Endothelial cell of umbilical vein (primary cell): ENCODE measurements at regions of chr9 and their contacts with region 1.

Region 1: GRCh38 chr9:131799177-131799823 is 59.4 kb upstream of the RAPGEF1 start:
- DNase-seq: peak; percentile 35
- H3K4me3 ChIP-seq: no peak overlapping the region
- H3K27ac ChIP-seq: no peak overlapping the region
- H3K4me1 ChIP-seq: no peaks in the 10 kb centered on the region
- H3K27me3 ChIP-seq: no peaks in the 10 kb centered on the region
- CTCF ChIP-seq: no peak
- POLR2A ChIP-seq: no peak

Region 2: DNA sequence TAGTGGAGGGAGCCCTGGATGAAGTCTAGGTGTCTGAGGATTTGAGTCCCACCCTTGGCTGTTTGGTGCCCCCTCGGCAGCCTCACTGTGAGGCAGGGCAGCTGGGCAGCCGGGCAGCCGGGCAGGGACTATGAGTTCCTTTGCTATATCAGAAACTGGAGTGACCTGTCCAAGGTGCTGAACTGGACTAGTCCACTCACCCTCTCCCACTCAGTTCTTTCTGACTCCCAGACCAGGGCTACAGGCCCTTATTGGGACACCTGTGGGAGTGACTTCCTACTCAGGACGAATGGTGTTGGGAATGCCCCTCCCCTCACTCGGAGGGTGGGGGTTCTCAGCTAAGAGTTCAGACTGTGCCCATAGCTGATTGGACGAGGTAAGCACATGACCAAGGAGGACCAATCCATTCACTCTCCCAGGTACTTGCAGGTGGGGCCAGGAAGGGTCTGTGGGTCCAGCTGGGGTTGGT is 25.4 kb before region 1 on chr9:
- CTCF ChIA-PET with region 1: no interaction called
- POLR2A ChIA-PET with region 1: no interaction called
- dilution Hi-C with region 1: no loop called
- intact Hi-C with region 1: loop called (anchors 1 kb)
- DNase-seq: peak; percentile 42
- H3K4me3 ChIP-seq: no peak overlapping the region
- H3K27ac ChIP-seq: no peak overlapping the region
- H3K4me1 ChIP-seq: no peaks in the 10 kb centered on the region
- H3K27me3 ChIP-seq: no peaks in the 10 kb centered on the region
- CTCF ChIP-seq: no peak
- POLR2A ChIP-seq: no peak

Region 3: GRCh38 chr9:131826968-131827525 is 27.7 kb after region 1 on chr9:
- CTCF ChIA-PET with region 1: no interaction called
- POLR2A ChIA-PET with region 1: no interaction called
- dilution Hi-C with region 1: no loop called
- intact Hi-C with region 1: loop called (anchors 2 kb)
- DNase-seq: no peak
- H3K4me3 ChIP-seq: no peak overlapping the region
- H3K27ac ChIP-seq: no peak overlapping the region
- H3K4me1 ChIP-seq: no peaks in the 10 kb centered on the region
- H3K27me3 ChIP-seq: peaks cover 0 to 2% of the 10 kb centered on the region in 2 experiments
- CTCF ChIP-seq: no peak
- POLR2A ChIP-seq: no peak

Region 4: DNA sequence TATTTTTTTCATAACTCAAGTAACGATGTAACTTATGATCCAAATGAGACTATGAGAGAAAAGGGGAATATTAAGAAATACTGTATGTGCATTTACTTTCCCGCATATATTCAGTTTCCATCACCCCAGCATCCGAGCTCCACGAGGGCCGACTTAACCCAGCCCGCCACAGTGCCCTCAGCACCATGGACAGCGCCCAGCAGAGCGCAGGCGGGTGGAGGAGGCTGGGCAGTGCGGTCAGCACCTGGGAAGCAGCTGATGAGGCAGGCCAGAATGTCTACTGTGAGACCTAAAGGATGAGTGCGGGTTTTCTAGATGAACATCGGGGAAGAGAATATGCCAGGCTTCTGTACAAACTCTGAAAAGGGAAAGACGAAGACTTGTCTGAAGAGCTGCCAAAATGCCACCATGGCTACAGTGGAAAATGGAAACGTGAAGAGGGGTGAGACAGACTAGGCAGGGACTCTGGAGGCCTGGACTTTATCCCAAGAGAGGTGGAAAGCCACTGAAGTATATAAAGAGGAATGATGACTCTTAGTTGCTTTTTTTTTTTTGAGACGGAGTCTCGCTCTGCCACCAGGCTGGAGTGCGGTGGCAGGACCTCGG is 314.9 kb after region 1 on chr9:
- CTCF ChIA-PET with region 1: no interaction called
- POLR2A ChIA-PET with region 1: no interaction called
- dilution Hi-C with region 1: loop called (anchors 25 kb)
- intact Hi-C with region 1: loop called (anchors 5 kb)
- DNase-seq: peak; percentile 52
- H3K4me3 ChIP-seq: no peak overlapping the region
- H3K27ac ChIP-seq: no peak overlapping the region
- H3K4me1 ChIP-seq: no peaks in the 10 kb centered on the region
- H3K27me3 ChIP-seq: peaks cover 0 to 2% of the 10 kb centered on the region in 2 experiments
- CTCF ChIP-seq: no peak
- POLR2A ChIP-seq: no peak